Activated CD4-positive, alpha-beta T cell treated with anti-CD3 and anti-CD28 coated beads for 36 hours (primary cell): ENCODE measurements at regions of chr1 and their contacts with region 1.

Region 1: DNA sequence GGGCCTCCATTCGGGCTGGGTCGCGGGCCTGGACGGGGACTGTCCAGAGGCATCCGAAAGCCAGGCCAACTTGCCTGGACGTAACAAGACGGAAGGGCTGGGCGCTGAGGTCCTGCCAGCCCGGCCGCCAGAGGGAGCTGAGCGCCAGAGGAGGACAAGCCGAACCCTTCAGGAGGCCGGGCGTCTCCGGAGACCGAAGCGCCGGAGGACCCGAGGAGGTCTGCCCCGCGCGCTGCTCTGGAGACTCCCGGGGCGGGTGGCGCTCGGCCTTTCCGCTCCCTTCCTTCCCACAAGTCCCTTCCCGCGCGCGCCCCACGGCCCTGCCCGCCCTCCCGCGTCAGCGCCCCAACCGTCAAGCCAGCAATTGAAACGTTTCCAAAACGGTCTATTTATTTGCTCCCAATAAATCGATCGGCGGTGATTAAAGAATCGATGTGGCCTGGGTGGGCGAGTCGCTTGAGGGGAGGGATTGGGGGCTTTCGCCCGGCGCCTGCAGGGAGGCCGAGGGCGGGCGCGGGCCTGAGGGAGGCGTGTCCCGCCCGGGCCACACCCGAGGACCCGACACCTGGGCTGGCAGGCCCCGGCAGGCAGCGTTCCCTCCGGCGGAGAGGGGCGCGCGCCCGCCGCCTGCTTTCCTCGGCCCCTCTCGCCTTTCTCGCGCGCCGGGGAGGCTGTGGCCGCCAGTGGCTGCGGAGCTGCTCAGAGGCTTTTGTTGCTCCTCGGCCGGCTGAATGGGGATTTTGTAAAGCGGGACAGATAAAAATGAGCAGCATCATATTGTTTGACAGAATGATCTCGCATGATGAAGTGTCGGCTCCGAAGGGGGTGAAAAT is 5.2 kb upstream of the FOXD3 start:
- DNase-seq: peak; percentile 82
- ATAC-seq: peak; percentile 77
- H3K4me3 Mint-ChIP-seq: peak overlapping the region; percentile 58
- H3K27ac Mint-ChIP-seq: no peak overlapping the region
- H3K4me1 Mint-ChIP-seq: peaks cover 30% of the 10 kb centered on the region
- H3K27me3 Mint-ChIP-seq: peaks cover 67% of the 10 kb centered on the region

Region 2: DNA sequence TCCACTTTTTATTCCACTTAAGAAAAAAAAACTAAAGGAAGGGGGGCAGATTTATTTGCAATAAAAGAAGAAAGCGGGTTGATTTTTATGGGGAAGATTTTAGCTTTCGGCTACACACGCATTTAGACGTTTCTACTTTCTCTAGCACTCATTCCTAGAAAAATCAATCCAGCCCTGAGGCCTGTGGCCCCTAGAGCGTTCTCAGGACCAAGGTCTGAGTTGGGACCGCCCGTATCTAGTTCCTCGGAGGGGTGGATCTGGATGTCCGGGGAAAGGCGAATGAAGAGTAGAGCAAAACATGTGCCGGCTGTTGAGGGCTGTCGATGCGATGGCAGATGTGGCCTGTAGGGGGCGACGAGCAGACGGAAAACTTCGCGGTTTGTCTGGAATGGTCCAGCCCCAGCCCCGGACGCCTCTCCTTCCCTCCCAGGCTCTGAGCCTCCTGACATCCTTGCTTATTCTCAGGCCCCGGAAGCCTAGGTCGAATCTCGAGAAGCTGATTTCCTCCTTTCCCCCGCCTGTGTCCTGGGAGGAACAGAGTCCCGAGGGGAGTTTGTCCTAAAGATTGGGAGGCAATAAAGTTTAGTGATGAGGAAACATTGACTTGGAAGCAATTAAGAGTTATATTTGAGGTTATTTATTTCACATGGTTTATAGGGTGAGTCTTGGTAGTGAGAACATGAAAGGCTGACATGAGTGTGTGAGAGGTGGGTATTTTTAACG is 10.4 kb after region 1 on chr1:
- CTCF ChIA-PET with region 1: interaction called, 13 read pairs
- POLR2A ChIA-PET with region 1: no interaction called
- intact Hi-C with region 1: loop called (anchors 1 kb)
- DNase-seq: peak; percentile 79
- ATAC-seq: peak; percentile 61
- H3K4me3 Mint-ChIP-seq: peak overlapping the region; percentile 0
- H3K27ac Mint-ChIP-seq: no peak overlapping the region
- H3K4me1 Mint-ChIP-seq: peaks cover 24% of the 10 kb centered on the region
- H3K27me3 Mint-ChIP-seq: peaks cover 61% of the 10 kb centered on the region

Region 3: DNA sequence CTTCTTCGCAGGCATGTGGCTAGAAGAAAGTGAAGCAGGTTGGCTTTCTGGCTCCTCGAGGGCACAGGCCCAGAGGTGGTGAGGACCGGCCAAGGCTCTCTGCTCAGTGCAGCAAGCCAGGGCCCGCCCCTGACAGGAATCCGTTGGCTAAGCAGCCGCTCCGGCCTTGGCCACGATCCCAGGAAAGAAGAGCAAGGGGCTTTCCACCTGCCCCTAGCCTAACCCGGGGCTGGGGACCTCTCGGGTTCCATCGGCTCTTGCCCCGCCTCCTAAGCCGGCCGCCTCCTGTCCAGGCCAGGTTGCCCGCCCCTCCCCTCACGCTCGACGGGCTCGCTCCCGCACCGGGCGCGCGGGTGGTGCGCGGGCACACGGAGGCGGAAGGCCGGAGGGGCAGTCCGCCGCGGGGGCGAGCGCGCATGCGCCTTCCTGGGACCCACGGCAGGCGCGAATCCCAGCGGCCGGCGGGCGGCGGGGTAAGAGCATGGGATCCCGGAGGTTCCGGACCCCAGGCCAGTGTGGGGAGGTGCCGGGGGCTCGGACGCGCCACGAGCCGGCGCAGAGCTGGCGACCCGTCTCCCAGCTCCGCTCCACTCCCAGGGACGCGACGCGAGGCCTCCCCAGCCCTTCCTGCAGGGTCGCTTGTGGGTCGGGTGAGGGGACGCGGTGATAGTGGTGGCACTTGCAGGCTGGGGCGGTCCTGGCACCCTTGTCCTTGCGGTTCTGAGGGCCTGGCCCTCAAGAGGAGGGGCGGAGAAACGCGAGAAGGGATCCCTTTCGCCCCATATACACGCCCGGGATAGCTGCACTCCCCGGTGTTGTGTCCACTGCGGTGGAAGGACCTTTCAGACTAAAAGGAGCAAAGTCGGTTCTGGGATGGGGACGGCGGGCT is 50.3 kb after region 1 on chr1 and contains the start of gene ALG6:
- CTCF ChIA-PET with region 1: interaction called, 4 read pairs
- POLR2A ChIA-PET with region 1: no interaction called
- intact Hi-C with region 1: loop called in 1 of 2 experiments (anchors 1 kb)
- DNase-seq: peak; percentile 94
- ATAC-seq: peak; percentile 94
- H3K4me3 Mint-ChIP-seq: peak within 1 kb of the TSS; percentile 98
- H3K27ac Mint-ChIP-seq: peak within 1 kb of the TSS; percentile 82
- H3K4me1 Mint-ChIP-seq: peaks cover 23% of the 10 kb centered on the region
- H3K27me3 Mint-ChIP-seq: peaks cover 5% of the 10 kb centered on the region
- total RNA-seq, gene ALG6: 16.2 to 16.3 TPM

Region 4: DNA sequence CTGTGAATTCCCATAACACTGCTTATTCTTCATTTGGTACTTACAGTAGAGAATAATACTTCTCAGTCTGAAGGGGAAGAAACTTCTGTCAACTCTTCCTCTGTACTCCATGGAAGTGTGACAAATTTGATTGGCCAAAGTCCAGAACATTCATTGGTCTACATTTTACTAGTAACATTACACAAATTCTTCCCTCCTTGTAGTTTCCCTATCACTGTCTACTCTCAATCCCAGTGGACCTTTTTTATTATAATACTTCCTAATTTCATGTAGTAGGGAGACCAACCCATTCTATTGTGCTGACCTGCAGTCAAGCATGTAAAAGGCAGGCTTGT is 124.9 kb after region 1 on chr1:
- CTCF ChIA-PET with region 1: no interaction called
- POLR2A ChIA-PET with region 1: no interaction called
- intact Hi-C with region 1: loop called (anchors 1 to 10 kb)
- DNase-seq: no peak
- ATAC-seq: no peak
- H3K4me3 Mint-ChIP-seq: no peak overlapping the region
- H3K27ac Mint-ChIP-seq: no peak overlapping the region
- H3K4me1 Mint-ChIP-seq: no peaks in the 10 kb centered on the region
- H3K27me3 Mint-ChIP-seq: no peaks in the 10 kb centered on the region

Region 5: DNA sequence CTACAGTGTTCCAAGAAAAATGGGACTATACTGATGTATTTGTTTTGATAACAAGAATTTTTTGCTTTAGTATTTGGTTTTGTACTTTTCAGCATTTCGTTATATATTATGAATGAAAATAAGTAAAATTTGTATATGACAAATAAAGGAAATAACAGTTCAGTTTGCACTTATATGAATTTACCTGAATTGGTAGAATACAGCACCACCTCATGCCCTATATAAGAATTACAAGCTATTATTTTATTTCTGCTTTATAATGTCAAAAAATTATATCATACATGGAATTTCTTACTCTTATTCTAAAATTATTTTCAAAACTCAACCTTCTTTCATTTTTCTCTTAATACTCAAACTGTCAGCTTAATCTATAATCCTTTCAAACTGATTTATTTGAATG is 220.7 kb after region 1 on chr1:
- CTCF ChIA-PET with region 1: no interaction called
- POLR2A ChIA-PET with region 1: no interaction called
- intact Hi-C with region 1: loop called (anchors 1 to 2 kb)
- DNase-seq: no peak
- ATAC-seq: no peak
- H3K4me3 Mint-ChIP-seq: no peak overlapping the region
- H3K27ac Mint-ChIP-seq: no peak overlapping the region
- H3K4me1 Mint-ChIP-seq: no peaks in the 10 kb centered on the region
- H3K27me3 Mint-ChIP-seq: no peaks in the 10 kb centered on the region